ENCODE measurements at regions of chr4 and their contacts with region 1.

Region 1: GRCh38 chr4:23741681-23742191 is 148.1 kb downstream of the PPARGC1A start:
- DNase-seq: peak; percentile 63
- H3K4me3 ChIP-seq: no peak overlapping the region
- H3K27ac ChIP-seq: peak overlapping the region; percentile 72
- H3K4me1 ChIP-seq: no peaks in the 10 kb centered on the region
- H3K27me3 ChIP-seq: no peaks in the 10 kb centered on the region
- CTCF ChIP-seq: no peak

Region 2: GRCh38 chr4:23500894-23501449 is 240.8 kb before region 1 on chr4:
- intact Hi-C with region 1: no loop called
- DNase-seq: no peak
- H3K4me3 ChIP-seq: no peak overlapping the region
- H3K27ac ChIP-seq: no peak overlapping the region
- H3K4me1 ChIP-seq: no peaks in the 10 kb centered on the region
- H3K27me3 ChIP-seq: no peaks in the 10 kb centered on the region
- CTCF ChIP-seq: no peak

Region 3: GRCh38 chr4:23706972-23707651 is 34.6 kb before region 1 on chr4:
- intact Hi-C with region 1: no loop called
- DNase-seq: no peak
- H3K4me3 ChIP-seq: no peak overlapping the region
- H3K27ac ChIP-seq: no peak overlapping the region
- H3K4me1 ChIP-seq: no peaks in the 10 kb centered on the region
- H3K27me3 ChIP-seq: no peaks in the 10 kb centered on the region
- CTCF ChIP-seq: no peak

Region 4: DNA sequence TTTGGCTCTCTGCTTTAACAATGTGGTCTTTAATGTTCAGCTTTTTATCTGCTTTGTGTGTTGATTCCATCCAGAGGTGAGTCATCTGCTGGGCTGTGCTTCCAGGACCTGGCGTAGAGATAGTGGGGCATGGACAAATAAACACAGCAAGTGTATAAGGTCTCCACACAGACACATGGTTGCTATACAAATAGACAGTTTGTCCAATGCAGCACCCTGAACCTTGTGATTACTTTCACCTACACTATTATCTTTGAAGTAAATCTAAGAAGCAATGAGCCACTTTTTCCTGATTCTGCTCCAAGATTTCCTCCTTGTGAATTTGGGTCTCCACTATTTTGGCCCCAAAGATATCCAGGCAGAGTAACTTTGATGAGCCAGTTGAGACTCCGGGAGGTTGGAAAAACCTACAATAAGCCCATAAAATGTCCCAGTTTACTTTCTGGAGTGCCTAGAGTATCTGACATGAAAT is 136.1 kb after region 1 on chr4:
- intact Hi-C with region 1: loop called (anchors 5 kb)
- DNase-seq: peak; percentile 72
- H3K4me3 ChIP-seq: no peak overlapping the region
- H3K27ac ChIP-seq: peak overlapping the region; percentile 69
- H3K4me1 ChIP-seq: peaks cover 4% of the 10 kb centered on the region
- H3K27me3 ChIP-seq: no peaks in the 10 kb centered on the region
- CTCF ChIP-seq: no peak